T-cell (primary cell): ENCODE measurements at regions of chr12 and their contacts with region 1.

Region 1: GRCh38 chr12:121525411-121525810 is 55.4 kb downstream of the KDM2B start:
- DNase-seq: no peak
- ATAC-seq: no peak
- H3K4me3 ChIP-seq: no peak overlapping the region
- H3K4me3 Mint-ChIP-seq: no peak overlapping the region
- H3K27ac ChIP-seq: no peak overlapping the region
- H3K27ac Mint-ChIP-seq: no peak overlapping the region
- H3K4me1 ChIP-seq: peaks cover 0 to 10% of the 10 kb centered on the region in 2 experiments
- H3K4me1 Mint-ChIP-seq: peaks cover 11 to 15% (median 12%) of the 10 kb centered on the region in 3 donors
- H3K27me3 ChIP-seq: no peaks in the 10 kb centered on the region
- H3K27me3 Mint-ChIP-seq: no peaks in the 10 kb centered on the region

Region 2: DNA sequence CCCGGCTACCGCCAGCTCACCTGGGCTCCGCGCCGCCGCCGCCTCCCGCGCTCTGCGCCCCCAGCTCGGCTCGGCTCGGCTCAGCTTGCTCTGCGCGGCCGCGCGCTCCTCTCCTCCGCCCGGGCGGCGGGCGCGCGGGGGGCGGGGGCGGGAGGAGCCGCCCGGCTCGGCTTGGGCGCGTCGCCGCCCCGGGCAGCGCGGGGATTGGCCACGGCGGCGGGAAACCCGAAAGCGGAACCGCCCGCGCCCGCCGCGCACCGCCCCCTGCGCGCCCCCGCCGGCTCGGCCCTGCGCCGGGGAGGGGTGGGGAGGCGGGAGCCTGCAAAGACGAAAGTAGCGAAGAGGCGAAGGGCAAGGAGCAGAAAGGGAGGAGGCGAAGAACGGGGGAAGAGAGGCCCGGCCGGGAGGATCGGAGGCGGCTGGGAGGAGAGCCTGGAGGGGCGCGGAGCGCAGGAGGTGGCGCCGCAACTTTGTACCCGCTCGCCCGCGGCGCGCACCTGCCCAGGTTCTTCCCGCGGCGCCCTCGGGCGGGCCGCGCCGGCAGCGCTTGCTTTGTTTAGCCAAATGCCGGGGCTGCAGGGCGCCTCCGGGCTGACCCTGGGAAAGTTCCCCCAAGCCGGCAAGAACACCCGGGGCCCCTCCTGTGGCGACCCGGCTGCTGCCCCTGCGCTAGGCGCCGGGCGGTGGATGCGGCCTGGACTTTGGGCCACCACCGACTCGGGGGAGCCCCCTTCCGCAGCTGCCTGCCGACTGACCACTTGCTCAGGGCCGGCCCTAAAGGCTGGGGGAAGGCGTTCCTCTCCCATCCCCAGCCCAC is 228.6 kb before region 1 on chr12 and contains the start of gene CAMKK2:
- CTCF ChIA-PET with region 1: no interaction called
- POLR2A ChIA-PET with region 1: interaction called in 1 of 2 experiments, 10 read pairs
- DNase-seq: peak; percentile 73 to 94 (median 84)
- ATAC-seq: peak; percentile 90 to 93 (median 90)
- H3K4me3 ChIP-seq: peak within 1 kb of the TSS; percentile 76 to 92
- H3K4me3 Mint-ChIP-seq: peak within 1 kb of the TSS; percentile 84 to 89 (median 87)
- H3K27ac ChIP-seq: no peak within 1 kb of the TSS
- H3K27ac Mint-ChIP-seq: peak within 1 kb of the TSS; percentile 61 to 85
- H3K4me1 ChIP-seq: peaks cover 10 to 32% of the 10 kb centered on the region in 2 experiments
- H3K4me1 Mint-ChIP-seq: peaks cover 13 to 24% (median 16%) of the 10 kb centered on the region in 3 donors
- H3K27me3 ChIP-seq: no peaks in the 10 kb centered on the region
- H3K27me3 Mint-ChIP-seq: no peaks in the 10 kb centered on the region
- total RNA-seq, gene CAMKK2: 13.6 to 25.5 (median 19.8) TPM

Region 3: DNA sequence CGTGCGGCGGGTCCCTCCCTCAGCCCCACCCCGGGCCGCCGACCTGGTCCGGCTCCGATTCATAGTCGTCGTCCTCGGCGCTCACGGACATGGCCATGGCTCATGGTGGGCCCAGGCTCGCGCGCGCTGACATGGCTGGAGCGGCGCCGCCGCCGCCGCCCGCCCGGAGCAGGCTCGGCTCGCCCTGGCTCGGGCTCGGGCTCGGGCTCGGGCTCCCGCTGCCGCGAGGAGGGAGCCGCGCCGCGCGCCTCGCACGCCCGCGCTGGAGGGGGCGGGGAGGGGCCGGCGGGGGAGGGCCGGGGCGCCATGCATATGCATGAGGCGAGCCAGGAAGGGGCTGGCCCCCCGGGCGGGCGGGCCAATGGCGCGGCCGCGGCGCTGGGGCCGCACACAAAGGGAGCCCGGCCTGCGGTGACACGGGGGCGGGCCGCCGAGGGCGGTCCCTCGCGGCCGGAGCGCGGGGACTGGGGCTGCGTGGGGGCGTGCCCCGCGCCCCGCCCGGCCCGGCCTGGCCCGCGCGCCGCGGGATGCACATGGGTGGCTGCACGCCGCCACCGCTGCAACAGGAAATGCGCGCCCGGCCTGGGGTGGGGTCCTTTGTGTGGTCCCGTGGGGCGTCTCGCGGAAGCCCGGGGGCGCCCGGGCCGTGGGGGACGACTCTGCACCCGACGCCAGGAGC is 58.2 kb before region 1 on chr12:
- CTCF ChIA-PET with region 1: no interaction called
- POLR2A ChIA-PET with region 1: no interaction called
- DNase-seq: peak; percentile 74 to 92 (median 84)
- ATAC-seq: peak; percentile 88 to 89 (median 88)
- H3K4me3 ChIP-seq: peak overlapping the region; percentile 40 to 44
- H3K4me3 Mint-ChIP-seq: peak overlapping the region in 2 of 3 donors; percentile 31 to 86
- H3K27ac ChIP-seq: peak overlapping the region; percentile 55
- H3K27ac Mint-ChIP-seq: no peak overlapping the region
- H3K4me1 ChIP-seq: peaks cover 14 to 34% of the 10 kb centered on the region in 2 experiments
- H3K4me1 Mint-ChIP-seq: peaks cover 18 to 33% (median 28%) of the 10 kb centered on the region in 3 donors
- H3K27me3 ChIP-seq: no peaks in the 10 kb centered on the region
- H3K27me3 Mint-ChIP-seq: no peaks in the 10 kb centered on the region